Posterior vena cava (tissue), 2 donors: ENCODE measurements at regions of chr19 and their contacts with region 1.

Region 1: GRCh38 chr19:48795055-48795684 is 15.7 kb downstream of the BCAT2 start:
- DNase-seq: peak; percentile 97

Region 2: GRCh38 chr19:48842789-48843162 is 47.6 kb after region 1 on chr19:
- intact Hi-C with region 1: loop called in 1 of 2 experiments (anchors 2 kb)
- DNase-seq: no peak

Region 3: GRCh38 chr19:48965040-48965805 is 170.1 kb after region 1 on chr19 and contains the start of gene FTL:
- intact Hi-C with region 1: loop called (anchors 5 to 10 kb)
- DNase-seq: peak; percentile 99
- total RNA-seq, gene FTL: 2,854 to 3,275 TPM

Region 4: DNA sequence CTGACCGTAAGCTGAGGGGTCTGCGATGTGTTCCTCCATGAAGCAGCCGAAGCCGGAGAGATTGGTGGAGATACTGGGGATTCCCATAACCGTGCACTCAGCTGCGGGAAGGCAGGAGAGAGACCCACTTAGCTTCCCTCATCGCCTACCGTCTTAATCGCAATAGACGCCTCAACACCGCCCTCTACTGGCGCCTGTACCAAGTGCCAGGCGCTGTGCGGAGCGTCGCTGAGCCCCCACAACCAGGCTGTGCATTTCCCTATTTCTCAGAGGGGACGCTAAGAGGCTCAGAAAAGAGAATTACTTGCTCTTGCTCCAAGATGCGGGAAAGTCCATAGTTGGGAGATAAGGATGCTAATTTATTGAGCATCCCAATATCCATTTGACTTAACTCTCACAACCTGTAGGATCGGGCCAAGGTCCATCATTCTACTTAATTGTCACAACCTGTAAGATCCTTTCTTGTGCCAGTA is 175.8 kb after region 1 on chr19:
- intact Hi-C with region 1: loop called (anchors 5 to 10 kb)
- DNase-seq: peak; percentile 95

Region 5: GRCh38 chr19:49056010-49056901 is 261.1 kb after region 1 on chr19:
- intact Hi-C with region 1: no loop called
- DNase-seq: no peak